Mammary epithelial cell (primary cell): ENCODE measurements at regions of chr14 and their contacts with region 1.

Region 1: GRCh38 chr14:21455911-21456667 is at the start of gene CHD8:
- DNase-seq: peak; percentile 100
- H3K4me3 ChIP-seq: peak within 1 kb of the TSS; percentile 75 to 93 (median 93)
- H3K27ac ChIP-seq: peak within 1 kb of the TSS; percentile 87
- H3K4me1 ChIP-seq: peaks cover 12% of the 10 kb centered on the region
- H3K27me3 ChIP-seq: no peaks in the 10 kb centered on the region
- CTCF ChIP-seq: peak; percentile 45 to 69
- total RNA-seq, gene CHD8: 69.2 to 76.0 TPM

Region 2: GRCh38 chr14:21269252-21270046 is 186.6 kb before region 1 on chr14 and contains the start of gene HNRNPC:
- CTCF ChIA-PET with region 1: no interaction called
- dilution Hi-C with region 1: no loop called
- in situ Hi-C with region 1: no loop called
- intact Hi-C with region 1: loop called (anchors 2 kb)
- DNase-seq: peak; percentile 100
- H3K4me3 ChIP-seq: peak within 1 kb of the TSS; percentile 73 to 99 (median 99)
- H3K27ac ChIP-seq: peak within 1 kb of the TSS; percentile 98
- H3K4me1 ChIP-seq: peaks cover 20% of the 10 kb centered on the region
- H3K27me3 ChIP-seq: no peaks in the 10 kb centered on the region
- CTCF ChIP-seq: no peak
- total RNA-seq, gene HNRNPC: 471 to 576 TPM

Region 3: DNA sequence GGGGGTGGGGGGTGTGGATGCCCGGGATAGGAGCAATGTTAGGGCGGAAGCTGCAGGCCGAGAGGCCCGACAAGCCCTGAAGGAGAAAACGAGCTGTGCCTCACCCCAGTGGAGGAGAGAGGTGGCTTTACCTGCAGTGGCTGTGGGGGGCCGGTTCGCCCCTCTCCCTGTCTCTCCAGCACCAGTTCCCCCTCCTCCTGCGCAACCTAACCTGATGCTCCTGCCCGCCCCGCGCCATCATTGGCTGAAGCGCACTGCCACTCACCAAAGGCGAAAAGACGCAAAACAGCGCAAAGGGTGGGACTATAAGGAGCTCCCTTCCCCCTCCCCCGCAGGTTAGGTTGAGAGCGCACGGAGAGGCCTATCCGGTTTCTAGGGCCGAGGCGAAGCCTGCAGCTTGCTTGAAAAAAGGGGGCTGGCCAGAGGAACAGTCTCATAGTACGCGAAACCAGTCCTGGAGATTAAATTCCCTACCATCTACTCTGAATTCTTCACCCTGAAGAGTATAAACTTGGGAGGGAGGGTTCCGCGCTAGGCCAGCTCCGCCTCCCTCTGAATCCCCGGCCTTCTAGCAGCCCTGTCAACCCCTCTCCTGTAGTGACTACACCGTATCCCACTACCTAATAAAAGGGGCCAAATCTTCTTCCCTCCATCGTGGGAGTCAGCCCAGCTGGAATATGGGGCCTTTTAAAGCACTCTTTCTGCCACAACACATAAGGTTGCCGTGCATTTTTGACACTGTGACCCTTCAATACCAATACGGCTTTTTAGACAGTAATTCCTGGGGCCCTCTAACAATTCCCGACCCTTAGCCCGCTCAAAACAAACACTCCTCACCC is 18.8 kb before region 1 on chr14:
- CTCF ChIA-PET with region 1: interaction called, 9 read pairs
- dilution Hi-C with region 1: no loop called
- in situ Hi-C with region 1: no loop called
- intact Hi-C with region 1: loop called (anchors 1 kb)
- DNase-seq: peak; percentile 98
- H3K4me3 ChIP-seq: peak overlapping the region; percentile 80 to 91 (median 84)
- H3K27ac ChIP-seq: peak overlapping the region; percentile 80
- H3K4me1 ChIP-seq: peaks cover 12% of the 10 kb centered on the region
- H3K27me3 ChIP-seq: no peaks in the 10 kb centered on the region
- CTCF ChIP-seq: no peak

Region 4: DNA sequence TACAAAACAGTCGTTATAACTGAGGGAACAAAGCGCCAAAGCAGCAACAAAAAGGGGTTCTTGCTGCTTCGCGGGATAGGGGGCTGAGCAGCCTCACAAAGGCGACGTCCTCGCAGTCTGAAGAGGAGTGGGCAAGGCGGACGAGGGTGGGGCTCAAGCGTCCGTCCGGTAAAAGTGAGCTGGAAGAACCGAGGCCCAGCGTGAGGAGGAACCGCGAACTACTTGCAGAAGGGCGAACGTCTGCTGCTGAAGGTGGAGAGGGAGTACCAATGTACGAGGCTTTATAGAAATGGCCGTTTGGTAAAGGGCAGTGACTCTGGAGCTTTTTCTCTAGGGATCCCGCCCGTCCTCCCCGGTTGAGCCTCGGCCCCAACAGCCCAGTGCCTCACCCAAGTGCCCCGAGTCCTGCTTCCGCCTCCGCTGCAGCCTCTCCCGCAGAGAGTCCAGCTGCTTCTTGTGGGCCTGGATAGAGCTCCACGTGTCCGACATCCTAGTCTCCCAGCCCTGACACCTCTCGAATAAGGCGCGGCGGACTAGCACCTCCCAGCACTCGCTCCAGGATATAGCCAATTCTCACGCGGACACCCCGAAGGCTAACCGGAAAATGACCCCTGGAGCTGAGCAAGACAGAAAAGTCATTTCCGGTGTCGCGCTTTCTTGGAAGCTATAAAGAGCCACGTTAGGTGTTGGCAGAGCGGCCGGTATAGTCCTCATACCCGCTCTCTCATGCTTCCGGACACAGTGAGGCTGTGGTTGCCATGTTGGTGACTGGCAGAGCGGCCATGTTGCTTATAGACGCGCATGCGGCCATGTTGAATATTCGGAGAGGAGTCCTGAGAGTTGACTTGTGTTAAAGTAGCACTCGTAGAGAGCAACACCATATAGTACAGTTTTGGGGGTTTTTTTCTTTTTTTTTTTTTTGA is 54.9 kb after region 1 on chr14 and contains the start of gene METTL3:
- CTCF ChIA-PET with region 1: no interaction called
- dilution Hi-C with region 1: no loop called
- in situ Hi-C with region 1: no loop called
- intact Hi-C with region 1: loop called (anchors 1 kb)
- DNase-seq: peak; percentile 99
- H3K4me3 ChIP-seq: peak within 1 kb of the TSS; percentile 72 to 90 (median 76)
- H3K27ac ChIP-seq: peak within 1 kb of the TSS; percentile 59
- H3K4me1 ChIP-seq: no peaks in the 10 kb centered on the region
- H3K27me3 ChIP-seq: no peaks in the 10 kb centered on the region
- CTCF ChIP-seq: no peak
- total RNA-seq, gene METTL3: 40.3 to 43.3 TPM